BJ (cell line): ENCODE measurements at regions of chr4 and their contacts with region 1.

Region 1: DNA sequence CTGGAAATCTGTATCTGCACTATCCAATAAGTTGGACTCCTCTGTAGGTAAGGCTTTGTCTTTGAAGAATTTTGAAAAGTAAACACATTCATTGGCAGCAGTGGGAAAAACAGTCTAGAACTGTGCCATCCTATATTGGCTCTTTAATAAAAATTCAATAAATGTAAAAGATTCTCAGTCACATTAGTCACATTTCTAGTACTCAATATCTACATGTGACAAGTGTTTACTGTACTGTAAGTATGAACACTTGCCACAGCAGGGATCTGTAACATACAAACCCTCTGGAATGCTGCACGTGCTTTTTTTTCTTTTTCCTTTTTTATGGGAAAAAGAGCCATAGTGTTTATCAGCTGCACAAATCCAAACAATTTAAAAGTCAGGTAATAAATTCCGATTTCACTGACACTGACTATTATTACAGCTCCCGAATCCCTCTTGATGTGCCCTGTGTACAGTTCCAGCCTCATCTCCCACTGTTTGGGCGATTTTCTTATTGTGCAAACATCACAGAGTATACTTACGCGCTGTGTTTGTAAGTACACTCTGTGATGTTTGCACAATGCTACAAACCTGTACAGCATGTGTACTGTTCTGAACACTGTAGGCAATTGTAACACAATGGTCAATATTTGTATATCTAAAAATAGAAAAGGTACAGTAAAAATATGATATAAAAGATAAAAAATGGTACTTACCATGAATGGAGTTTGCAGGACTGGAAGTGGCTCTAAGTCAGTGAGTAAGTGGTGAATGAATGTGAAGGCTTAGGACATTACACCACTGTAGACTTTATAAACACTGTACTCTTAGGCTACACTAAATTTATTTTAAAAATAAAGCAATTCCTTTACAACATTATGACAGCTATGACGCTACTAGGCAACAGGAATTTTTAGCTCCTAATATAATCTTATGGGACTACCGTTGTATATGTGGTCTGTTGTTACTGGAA is 8.7 kb downstream of the PYURF start:
- DNase-seq: no peak
- H3K4me3 ChIP-seq: no peak overlapping the region
- H3K27me3 ChIP-seq: no peaks in the 10 kb centered on the region
- CTCF ChIP-seq: no peak

Region 2: GRCh38 chr4:88369936-88370335 is 144.9 kb before region 1 on chr4:
- CTCF ChIA-PET with region 1: interaction called, 14 read pairs
- POLR2A ChIA-PET with region 1: no interaction called
- DNase-seq: no peak
- H3K4me3 ChIP-seq: no peak overlapping the region
- H3K27me3 ChIP-seq: no peaks in the 10 kb centered on the region
- CTCF ChIP-seq: no peak

Region 3: GRCh38 chr4:88503344-88503743 is 11.5 kb before region 1 on chr4:
- CTCF ChIA-PET with region 1: interaction called, 10 read pairs
- POLR2A ChIA-PET with region 1: no interaction called
- DNase-seq: no peak
- H3K4me3 ChIP-seq: no peak overlapping the region
- H3K27me3 ChIP-seq: peaks cover 2% of the 10 kb centered on the region; the same call in 1 of the 2 replicates
- CTCF ChIP-seq: no peak

Region 4: DNA sequence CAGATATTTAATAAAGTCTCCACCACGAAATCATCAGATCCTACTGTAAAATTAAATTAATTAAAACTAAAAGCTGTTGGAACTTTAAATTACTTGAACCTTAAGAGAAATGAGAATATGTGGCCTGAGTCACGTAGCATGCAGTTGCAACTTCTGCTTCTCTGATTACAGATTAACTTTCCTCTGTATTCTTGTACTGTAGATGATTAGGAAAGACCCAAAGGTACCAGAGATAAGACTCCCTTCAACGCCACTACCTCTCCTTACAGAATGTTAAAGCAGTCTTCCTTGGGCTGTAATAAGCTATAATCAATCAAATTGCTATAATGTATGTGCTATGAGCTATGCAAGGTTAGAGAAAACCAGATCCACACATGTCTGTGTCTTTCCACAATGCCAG is 494.3 kb after region 1 on chr4:
- CTCF ChIA-PET with region 1: no interaction called
- POLR2A ChIA-PET with region 1: no interaction called
- DNase-seq: no peak
- H3K4me3 ChIP-seq: no peak overlapping the region
- H3K27me3 ChIP-seq: no peaks in the 10 kb centered on the region
- CTCF ChIP-seq: no peak

Region 5: DNA sequence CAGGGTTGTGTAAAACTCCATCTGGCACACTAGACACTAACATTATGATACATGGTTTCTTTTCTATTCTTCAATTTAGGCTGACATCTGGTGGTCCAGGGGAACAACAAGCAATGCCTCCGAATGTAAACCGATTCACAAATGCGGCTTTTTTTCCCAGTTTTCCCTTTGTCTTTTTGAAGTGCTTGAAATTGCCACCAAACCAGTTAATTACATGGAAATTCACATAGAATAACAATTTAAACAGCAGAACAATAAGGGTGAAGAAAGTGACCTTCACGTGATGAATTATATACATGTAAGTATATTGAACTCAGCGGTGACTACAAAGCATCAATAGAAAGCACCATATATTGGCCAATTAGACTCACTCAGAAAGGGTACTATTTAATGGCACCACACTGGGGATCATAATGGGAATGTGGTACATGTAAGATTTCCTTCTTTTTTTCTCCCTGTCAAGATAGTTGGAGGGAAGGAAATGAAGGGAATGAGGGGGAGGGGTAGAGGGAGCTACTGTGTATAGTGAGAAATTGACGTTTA is 1483.7 kb after region 1 on chr4:
- CTCF ChIA-PET with region 1: no interaction called
- POLR2A ChIA-PET with region 1: no interaction called
- DNase-seq: no peak
- H3K4me3 ChIP-seq: no peak overlapping the region
- H3K27me3 ChIP-seq: no peaks in the 10 kb centered on the region
- CTCF ChIP-seq: no peak